Gastrocnemius medialis (tissue), 4 donors: ENCODE measurements at regions of chr19 and their contacts with region 1.

Region 1: GRCh38 chr19:1592755-1593500 is at the start of gene MBD3:
- DNase-seq: peak; percentile 89 to 94
- ATAC-seq: peak; percentile 80 to 87
- H3K4me3 ChIP-seq: peak within 1 kb of the TSS; percentile 76 to 90 (median 85)
- H3K27ac ChIP-seq: peak within 1 kb of the TSS; percentile 88 to 98 (median 94)
- H3K4me1 ChIP-seq: peaks cover 19 to 30% of the 10 kb centered on the region in 2 donors
- H3K27me3 ChIP-seq: no peaks in the 10 kb centered on the region
- CTCF ChIP-seq: peak in 2 of 5 experiments; percentile 18 to 21
- POLR2A ChIP-seq: no peak
- total RNA-seq, gene MBD3: 66.9 to 147 (median 118) TPM

Region 2: DNA sequence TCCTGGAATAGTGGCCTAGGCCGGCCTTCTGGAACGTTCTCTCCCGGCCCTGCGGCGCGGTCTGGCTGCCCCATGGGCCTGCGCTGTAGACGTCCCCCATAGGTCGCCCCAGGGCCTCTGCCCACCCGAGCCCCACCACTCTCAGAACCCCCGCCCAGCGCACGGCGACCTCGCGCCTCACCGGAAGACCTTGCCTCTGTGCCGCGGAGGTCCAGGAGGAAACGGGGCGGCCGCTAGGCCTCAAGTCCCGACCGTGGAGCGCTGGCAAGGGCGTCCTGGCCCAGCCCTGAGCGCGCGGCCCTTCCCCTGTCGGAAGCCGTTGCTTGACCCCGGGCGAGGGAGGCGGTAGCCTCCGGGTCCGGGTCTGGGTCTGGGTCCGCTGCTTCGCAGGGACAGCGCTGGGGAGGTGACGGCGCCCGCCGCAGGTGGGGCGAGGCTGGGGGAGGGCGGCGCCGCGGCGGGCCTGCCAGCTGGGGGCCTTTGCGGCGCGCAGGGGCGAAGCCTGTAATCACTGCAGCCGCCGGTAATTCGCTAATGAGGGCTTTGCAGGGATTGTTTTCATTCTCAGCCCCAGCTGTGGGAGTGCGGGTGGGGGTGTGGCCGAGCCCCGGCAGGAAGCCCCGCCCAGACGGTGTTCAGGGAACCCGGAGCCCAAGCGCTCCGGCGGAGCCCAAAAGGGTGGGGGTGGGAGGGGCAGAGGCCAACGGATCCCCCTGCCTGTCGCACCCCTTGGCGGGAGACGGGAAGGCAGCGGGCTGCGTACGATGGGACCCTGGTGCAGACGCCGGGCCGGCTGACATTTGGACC is 122.5 kb before region 1 on chr19:
- in situ Hi-C with region 1: no loop called
- intact Hi-C with region 1: no loop called
- DNase-seq: no peak
- ATAC-seq: no peak
- H3K4me3 ChIP-seq: peak overlapping the region; percentile 26 to 52 (median 42)
- H3K27ac ChIP-seq: no peak overlapping the region
- H3K4me1 ChIP-seq: peaks cover 11 to 49% of the 10 kb centered on the region in 2 donors
- H3K27me3 ChIP-seq: peaks cover 72 to 78% (median 72%) of the 10 kb centered on the region in 3 donors
- CTCF ChIP-seq: no peak
- POLR2A ChIP-seq: no peak

Region 3: DNA sequence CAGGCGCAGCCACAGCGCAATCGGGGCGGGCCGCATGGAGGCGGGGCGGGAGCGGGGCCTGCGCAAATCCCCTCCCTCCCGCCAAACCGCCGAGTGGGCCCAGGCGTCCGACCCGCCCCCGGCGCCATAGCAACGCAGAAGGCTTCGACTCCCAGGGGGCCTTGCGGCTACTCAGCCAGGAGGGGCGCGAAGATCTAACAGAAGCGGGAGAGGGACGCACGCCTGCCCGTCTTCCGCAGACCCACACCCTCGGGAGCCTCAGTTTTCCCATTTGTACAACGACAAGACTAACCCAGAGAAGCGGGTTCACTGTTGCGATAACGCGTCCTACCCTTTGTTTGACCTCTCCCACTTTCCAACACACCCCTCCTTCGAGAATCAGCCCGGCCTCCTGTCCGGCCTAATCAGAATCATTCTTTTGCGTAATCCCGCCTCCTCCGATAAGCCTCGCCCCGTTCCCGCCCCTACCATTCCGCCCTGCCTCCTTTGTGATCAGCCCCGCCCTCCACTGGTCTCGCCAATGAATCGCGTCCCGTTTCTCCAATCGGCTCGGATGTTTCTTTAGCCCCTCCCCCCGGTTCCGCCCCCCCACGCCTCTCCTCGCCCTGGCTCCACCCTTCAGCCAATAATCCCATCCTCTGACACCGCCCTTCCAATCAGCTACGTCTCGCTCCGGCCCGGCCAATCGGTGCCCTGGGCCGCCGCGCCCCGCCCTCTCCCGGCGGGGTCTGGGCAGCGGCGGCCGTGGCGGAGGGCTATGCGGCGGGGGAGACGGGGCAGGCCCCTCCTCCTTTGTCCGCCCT is 102.4 kb before region 1 on chr19 and contains the start of gene PCSK4:
- in situ Hi-C with region 1: no loop called
- intact Hi-C with region 1: loop called (anchors 1 kb)
- DNase-seq: peak; percentile 98 to 99
- ATAC-seq: peak; percentile 94 to 98
- H3K4me3 ChIP-seq: peak within 1 kb of the TSS; percentile 54 to 73 (median 62)
- H3K27ac ChIP-seq: peak within 1 kb of the TSS; percentile 70 to 86 (median 76)
- H3K4me1 ChIP-seq: peaks cover 5 to 9% of the 10 kb centered on the region in 2 donors
- H3K27me3 ChIP-seq: no peaks in the 10 kb centered on the region
- CTCF ChIP-seq: peak in 1 of 5 experiments; percentile 5
- POLR2A ChIP-seq: no peak
- total RNA-seq, gene PCSK4: 0.12 to 0.60 (median 0.37) TPM

Region 4: DNA sequence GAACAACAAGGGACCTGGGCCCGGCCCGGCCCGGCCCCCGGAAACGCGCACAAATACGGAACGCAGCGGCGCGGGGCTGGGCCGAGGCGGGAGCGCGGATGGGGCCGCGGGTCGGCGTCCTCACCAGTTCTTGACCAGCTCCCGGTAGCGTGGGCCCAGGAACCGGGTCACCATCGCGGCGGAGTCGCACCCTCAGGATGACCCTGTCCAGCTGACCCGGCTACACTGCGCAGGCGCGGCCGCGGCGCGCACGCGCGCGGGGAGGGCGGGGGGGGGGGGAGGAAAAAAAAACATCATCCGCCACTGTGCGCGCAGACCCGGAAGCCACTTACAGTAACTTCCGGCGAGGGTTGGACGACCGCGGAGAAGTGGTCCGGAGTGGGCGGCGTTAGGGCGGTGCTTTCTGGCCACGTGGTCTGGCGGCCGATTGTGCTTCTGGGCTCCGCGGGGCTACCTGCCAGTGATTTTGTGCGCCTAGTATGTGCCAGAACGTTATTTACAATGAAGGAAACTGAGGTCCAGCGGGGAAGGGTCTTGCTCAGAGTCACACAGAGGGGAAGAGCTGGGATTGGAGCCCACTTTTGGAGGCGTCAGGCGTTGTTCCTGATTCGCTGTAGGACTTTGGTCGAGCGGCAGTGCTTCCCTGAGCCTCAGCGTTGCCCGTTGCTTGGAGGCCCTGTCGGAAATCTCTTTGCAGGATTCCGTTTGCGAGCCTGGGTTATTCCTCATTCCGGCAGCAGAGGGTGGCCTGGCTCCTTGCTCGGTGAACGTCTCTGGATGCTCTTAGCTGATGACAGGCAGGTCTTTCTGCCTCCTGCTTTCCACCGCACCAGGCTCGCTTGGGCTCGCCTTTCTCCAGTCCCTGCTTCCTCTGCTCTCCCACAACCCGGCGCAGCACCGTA is 12.6 kb after region 1 on chr19 and contains the start of gene UQCR11:
- in situ Hi-C with region 1: no loop called
- intact Hi-C with region 1: loop called (anchors 1 kb)
- DNase-seq: peak; percentile 93 to 95
- ATAC-seq: peak; percentile 94 to 96
- H3K4me3 ChIP-seq: peak within 1 kb of the TSS; percentile 83 to 99 (median 96)
- H3K27ac ChIP-seq: peak within 1 kb of the TSS; percentile 92 to 99 (median 98)
- H3K4me1 ChIP-seq: peaks cover 23 to 40% of the 10 kb centered on the region in 2 donors
- H3K27me3 ChIP-seq: no peaks in the 10 kb centered on the region
- CTCF ChIP-seq: peak; percentile 34 to 58 (median 52)
- POLR2A ChIP-seq: peak; percentile 52 to 79
- total RNA-seq, gene UQCR11: 106 to 173 (median 154) TPM